ENCODE measurements at regions of chr4 and their contacts with region 1.

Region 1: GRCh38 chr4:99808260-99808857 is 8.3 kb upstream of the DAPP1 start:
- DNase-seq: peak; percentile 75
- H3K4me3 Mint-ChIP-seq: no peak overlapping the region
- H3K27ac Mint-ChIP-seq: no peak overlapping the region
- H3K4me1 Mint-ChIP-seq: peaks cover 5% of the 10 kb centered on the region
- H3K27me3 Mint-ChIP-seq: no peaks in the 10 kb centered on the region
- CTCF ChIP-seq: peak; percentile 83

Region 2: GRCh38 chr4:99462875-99463464 is 345.4 kb before region 1 on chr4:
- CTCF ChIA-PET with region 1: interaction called, 8 read pairs
- POLR2A ChIA-PET with region 1: no interaction called
- intact Hi-C with region 1: loop called (anchors 2 kb)
- DNase-seq: peak; percentile 82
- H3K4me3 Mint-ChIP-seq: no peak overlapping the region
- H3K27ac Mint-ChIP-seq: no peak overlapping the region
- H3K4me1 Mint-ChIP-seq: peaks cover 11% of the 10 kb centered on the region
- H3K27me3 Mint-ChIP-seq: peaks cover 12% of the 10 kb centered on the region
- CTCF ChIP-seq: peak; percentile 84

Region 3: DNA sequence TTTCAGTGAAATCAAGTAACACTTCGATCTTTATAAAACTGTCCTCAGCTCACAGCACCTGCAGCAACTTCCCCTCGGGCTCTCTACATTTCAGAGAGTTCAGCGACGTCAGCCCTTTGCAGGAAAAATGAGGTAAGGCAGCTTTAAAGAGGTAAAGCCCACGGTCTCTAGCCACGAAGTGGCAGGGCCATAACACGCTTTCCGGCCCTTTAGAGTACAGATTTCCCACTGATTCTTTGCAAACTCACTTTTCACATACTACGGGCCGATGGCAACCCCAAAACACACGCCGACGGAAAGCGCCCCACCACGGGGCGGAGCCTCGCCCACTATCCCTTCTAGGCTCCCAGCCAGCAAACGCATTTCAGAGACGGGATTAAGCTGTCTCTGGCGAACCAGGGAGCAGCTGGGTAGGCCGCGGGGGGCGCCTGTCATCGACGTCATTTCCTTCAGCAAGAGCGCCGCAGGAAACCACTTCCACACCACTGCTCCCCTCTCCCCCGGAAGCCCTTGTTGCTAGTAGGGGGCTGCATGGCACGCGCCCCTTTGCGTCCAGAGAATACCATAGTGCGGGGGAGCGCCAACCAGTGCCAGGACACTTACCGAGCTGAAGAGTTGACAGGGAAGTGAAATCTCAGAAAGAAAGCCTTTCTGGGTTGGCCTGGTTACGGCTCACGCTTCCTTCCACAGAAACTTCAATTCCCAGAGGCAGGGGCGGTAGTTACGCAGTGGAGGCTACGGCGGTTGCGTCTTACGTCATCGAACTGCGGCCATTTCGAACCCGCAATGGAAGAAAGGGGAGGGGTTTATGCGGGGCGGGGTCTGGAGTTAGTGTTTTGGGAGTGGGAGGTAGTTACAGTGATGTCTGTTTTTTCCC is 244.8 kb before region 1 on chr4 and contains the start of gene TRMT10A:
- CTCF ChIA-PET with region 1: interaction called, 20 read pairs
- POLR2A ChIA-PET with region 1: interaction called, 34 read pairs
- intact Hi-C with region 1: loop called (anchors 1 kb)
- DNase-seq: peak; percentile 97
- H3K4me3 Mint-ChIP-seq: peak within 1 kb of the TSS; percentile 93
- H3K27ac Mint-ChIP-seq: peak within 1 kb of the TSS; percentile 100
- H3K4me1 Mint-ChIP-seq: no peaks in the 10 kb centered on the region
- H3K27me3 Mint-ChIP-seq: peaks cover 15% of the 10 kb centered on the region
- CTCF ChIP-seq: no peak
- total RNA-seq, gene TRMT10A: 17.7 and 19.1 TPM in 2 replicates

Region 4: DNA sequence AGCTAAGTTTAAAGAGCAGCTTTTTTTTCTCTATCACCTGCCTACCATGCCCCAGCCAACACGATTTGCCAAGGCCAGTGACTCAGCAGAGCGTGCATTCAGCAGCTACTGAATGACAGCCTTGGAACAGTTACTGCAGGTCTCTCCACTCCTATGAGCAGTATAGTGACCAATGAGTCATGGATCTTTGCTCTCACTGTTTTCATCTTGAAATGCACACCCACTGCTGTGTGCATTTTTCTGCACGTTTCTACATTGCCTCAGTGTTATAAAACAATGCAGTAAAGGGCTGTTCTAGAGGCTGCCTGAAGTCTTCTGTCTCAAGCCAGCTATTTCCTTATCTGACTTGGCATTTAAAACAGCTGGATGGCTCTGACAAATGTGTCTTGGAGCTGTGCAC is 84.7 kb before region 1 on chr4:
- CTCF ChIA-PET with region 1: interaction called, 44 read pairs
- POLR2A ChIA-PET with region 1: interaction called, 21 read pairs
- intact Hi-C with region 1: loop called (anchors 1 kb)
- DNase-seq: peak; percentile 93
- H3K4me3 Mint-ChIP-seq: no peak overlapping the region
- H3K27ac Mint-ChIP-seq: no peak overlapping the region
- H3K4me1 Mint-ChIP-seq: peaks cover 13% of the 10 kb centered on the region
- H3K27me3 Mint-ChIP-seq: no peaks in the 10 kb centered on the region
- CTCF ChIP-seq: no peak

Region 5: GRCh38 chr4:99827454-99827853 is 19.1 kb after region 1 on chr4:
- CTCF ChIA-PET with region 1: interaction called, 25 read pairs
- POLR2A ChIA-PET with region 1: no interaction called
- intact Hi-C with region 1: no loop called
- DNase-seq: peak; percentile 61
- H3K4me3 Mint-ChIP-seq: no peak overlapping the region
- H3K27ac Mint-ChIP-seq: no peak overlapping the region
- H3K4me1 Mint-ChIP-seq: peaks cover 18% of the 10 kb centered on the region
- H3K27me3 Mint-ChIP-seq: no peaks in the 10 kb centered on the region
- CTCF ChIP-seq: no peak

Region 6: DNA sequence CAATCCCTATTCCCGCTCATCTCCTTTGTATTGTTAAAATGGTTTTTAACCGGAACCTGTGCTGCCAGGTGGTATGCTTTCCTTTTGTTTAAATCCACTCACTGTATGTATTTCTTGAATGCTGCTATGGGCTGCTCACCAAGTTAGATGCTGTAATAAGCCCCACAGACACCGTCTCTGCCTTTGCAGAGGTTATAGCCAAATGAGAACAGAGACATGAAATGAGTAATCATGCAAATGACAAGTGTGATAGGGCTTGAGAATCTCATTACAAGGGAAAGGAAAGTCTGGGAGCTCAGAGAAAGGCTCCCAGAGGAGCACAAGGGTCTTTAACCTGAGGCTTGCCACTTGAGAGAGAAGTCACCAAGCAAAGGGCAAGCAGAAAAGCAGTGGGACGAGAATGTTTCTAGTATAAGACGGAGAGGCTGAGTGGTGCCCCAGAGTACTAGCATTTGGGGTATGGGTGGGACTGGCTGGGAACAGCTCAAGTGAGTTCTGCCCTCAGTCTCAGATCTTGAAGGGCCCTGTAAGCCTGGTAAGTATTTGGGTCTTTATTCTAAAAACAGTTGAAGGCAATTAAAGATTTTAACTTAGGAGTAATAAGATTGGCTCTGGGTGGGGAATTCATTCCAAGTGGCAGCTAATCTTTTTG is 252.5 kb after region 1 on chr4:
- CTCF ChIA-PET with region 1: no interaction called
- POLR2A ChIA-PET with region 1: no interaction called
- intact Hi-C with region 1: loop called (anchors 5 kb)
- DNase-seq: no peak
- H3K4me3 Mint-ChIP-seq: no peak overlapping the region
- H3K27ac Mint-ChIP-seq: no peak overlapping the region
- H3K4me1 Mint-ChIP-seq: no peaks in the 10 kb centered on the region
- H3K27me3 Mint-ChIP-seq: no peaks in the 10 kb centered on the region
- CTCF ChIP-seq: no peak